Testis (tissue), 5 donors: ENCODE measurements at regions of chr2 and their contacts with region 1.

Region 1: DNA sequence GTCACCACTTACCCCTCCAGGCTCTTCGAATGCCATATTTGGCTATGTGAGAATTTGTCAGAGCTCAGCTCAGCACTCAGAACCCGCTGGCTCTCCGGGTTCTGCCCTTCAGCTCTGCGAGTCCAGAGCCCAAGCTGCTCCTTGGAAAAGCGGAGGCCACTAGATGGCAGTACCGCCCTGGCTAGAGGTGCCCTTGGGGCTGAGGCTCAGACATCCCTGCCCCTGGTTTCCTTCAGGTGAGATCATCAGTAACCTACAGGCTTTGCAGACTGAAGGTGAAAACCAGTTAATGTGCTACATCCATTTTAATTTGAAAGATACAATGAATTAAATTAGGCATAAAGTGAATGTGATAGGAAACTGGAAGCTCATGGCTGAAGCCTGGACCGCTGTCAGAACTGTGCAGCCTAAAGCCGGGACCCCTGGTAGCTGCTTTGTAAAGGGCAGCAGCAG is 285.6 kb downstream of the AGAP1 start:
- DNase-seq: peak; percentile 84
- H3K4me3 ChIP-seq: no peak overlapping the region
- H3K27ac ChIP-seq: no peak overlapping the region
- H3K4me1 ChIP-seq: no peaks in the 10 kb centered on the region
- H3K27me3 ChIP-seq: no peaks in the 10 kb centered on the region
- CTCF ChIP-seq: peak in 2 of 3 experiments; percentile 47 to 74
- POLR2A ChIP-seq: no peak

Region 2: DNA sequence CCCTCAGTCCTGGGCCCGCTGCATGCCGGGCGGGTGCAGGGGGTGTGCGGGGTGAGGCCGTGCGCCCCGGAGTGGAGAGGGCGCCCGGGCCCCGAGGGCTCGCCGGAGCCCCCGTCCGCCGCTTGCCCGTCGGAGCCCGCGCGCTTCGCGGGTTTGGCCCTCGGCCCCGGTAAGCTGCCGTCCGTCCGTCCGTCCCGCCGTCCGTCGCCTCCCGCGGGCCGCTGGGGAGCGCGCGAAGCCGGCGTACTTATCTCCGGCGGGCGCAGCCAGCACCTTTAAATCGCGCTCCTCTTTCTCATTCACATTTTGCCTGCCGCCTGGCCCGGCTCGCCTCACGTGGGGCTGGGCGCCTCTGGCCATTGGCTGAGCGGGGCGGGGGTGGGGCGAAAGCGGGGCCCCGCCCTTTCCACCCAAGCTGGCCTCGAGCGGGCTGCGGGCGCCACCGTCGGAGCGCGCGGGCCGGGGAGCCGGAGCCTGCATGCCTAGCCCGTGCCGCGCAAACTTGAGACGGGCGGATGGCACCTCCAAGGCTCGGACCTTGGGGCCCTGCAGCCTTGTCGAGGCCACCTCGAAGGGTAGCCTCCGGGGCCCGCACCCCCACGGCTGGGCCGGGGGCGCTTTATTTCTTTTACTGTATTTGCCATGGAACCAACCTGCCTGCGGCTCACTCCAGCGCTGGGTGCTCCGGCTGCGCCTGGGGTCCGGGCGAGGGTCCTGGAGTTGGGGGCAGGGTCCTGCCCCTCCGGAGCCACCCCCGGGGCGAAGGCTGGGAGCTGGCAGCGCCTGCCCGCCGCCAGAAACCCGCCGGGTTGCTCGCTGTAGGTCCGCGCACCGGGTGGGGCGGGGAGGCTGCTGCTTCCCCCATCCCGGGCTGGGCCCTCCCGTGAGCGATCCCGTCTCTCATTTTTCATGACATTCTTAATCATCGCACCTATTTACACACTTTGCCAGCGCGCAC is 388.9 kb after region 1 on chr2 and contains the start of gene GBX2:
- intact Hi-C with region 1: loop called (anchors 10 kb)
- DNase-seq: peak; percentile 64
- H3K4me3 ChIP-seq: peak within 1 kb of the TSS; percentile 6 to 47
- H3K27ac ChIP-seq: no peak within 1 kb of the TSS
- H3K4me1 ChIP-seq: peaks cover 15% of the 10 kb centered on the region
- H3K27me3 ChIP-seq: no peaks in the 10 kb centered on the region
- CTCF ChIP-seq: no peak
- POLR2A ChIP-seq: no peak
- total RNA-seq, gene GBX2: 0.47 to 0.56 TPM

Region 3: DNA sequence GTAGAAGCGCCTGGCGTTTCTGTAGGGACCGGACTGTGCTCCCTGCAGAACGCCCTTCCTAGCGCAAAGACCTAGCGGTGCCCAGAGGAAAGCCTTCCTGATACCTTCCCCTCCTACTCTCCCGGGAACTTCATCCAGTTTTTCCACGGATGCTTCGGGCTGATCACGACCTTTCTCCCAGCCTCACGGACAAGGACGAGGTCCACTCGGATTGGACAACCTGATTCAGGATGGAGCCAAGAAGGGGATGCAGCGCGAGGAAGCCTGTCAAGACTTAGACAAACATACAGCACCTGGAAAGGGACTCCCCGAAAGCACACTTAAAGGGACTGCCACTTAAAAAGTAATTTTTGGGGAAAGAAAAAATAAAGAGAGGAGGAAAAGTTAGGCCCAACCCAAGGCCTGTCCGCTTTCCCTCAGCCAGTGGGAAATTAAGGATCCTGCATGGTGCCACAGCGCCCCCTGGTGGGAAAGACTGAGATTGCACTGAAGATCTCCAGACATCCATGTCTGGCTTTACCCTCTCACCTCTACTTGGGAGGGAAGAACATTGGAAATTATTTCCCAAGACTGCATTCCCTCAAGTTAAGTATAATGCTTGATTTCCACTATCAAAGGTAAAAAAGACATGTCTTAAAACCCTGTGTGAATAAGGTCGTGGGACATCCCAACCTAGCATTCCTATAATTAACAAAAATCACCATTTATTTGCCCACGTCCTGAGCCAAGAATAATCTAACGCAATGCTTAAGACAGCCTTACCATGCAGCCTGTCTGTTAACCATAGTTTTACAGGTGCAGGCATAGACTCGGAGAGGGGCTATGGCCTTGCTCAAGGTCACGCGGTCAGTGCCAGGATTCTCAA is 1292.8 kb after region 1 on chr2:
- intact Hi-C with region 1: loop called (anchors 10 kb)
- DNase-seq: peak; percentile 92
- H3K4me3 ChIP-seq: no peak overlapping the region
- H3K27ac ChIP-seq: no peak overlapping the region
- H3K4me1 ChIP-seq: no peaks in the 10 kb centered on the region
- H3K27me3 ChIP-seq: no peaks in the 10 kb centered on the region
- CTCF ChIP-seq: peak; percentile 92 to 99 (median 95)
- POLR2A ChIP-seq: no peak